Upper lobe of right lung (tissue), 1 donor: ENCODE measurements at regions of chr4 and their contacts with region 1.

Region 1: GRCh38 chr4:7034262-7035091 is 8.7 kb upstream of the TADA2B start:
- DNase-seq: peak; percentile 80
- ATAC-seq: peak; percentile 89
- H3K4me3 ChIP-seq: no peak overlapping the region
- H3K27ac ChIP-seq: peak overlapping the region; percentile 33
- H3K4me1 ChIP-seq: no peaks in the 10 kb centered on the region
- H3K27me3 ChIP-seq: no peaks in the 10 kb centered on the region
- CTCF ChIP-seq: no peak

Region 2: DNA sequence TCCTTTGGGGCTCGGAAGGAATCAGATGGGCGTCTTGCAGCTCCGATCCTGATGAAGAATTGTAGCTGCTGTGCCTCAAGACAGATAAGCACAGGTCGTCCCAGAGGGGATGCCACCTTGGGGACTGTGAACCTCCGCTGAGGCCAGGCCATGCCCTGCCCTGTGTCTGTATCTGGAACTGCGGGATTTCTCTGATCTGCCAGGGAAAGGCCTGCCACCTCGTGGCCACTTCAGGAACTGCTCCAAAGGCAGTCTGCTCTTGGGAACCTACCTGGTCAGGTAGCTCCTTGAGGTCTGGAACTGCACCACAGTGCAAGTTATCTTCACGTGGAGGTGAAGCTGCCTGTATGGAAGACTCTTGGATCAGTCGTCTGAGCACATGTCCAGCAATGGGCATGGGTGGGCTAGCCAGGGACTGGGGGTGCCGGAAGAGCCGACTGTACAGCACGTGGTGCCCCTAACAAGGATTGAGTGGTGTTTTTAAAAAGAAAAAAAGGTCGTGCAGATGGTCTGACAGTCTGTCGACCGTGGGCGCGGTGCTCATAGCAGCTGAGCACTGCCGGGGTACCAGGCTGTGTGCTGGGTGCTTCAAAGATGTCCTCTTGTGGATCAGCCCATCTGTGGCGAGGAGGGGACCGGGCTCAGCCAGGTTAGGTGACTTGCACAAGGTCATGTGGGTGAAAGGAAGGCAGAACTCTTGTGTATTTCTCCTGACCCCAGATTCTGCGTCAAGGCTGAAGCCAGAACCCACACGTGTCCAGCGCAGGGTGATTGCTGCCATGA is 36.4 kb after region 1 on chr4:
- intact Hi-C with region 1: loop called (anchors 5 kb)
- DNase-seq: peak; percentile 92
- ATAC-seq: peak; percentile 66
- H3K4me3 ChIP-seq: no peak overlapping the region
- H3K27ac ChIP-seq: no peak overlapping the region
- H3K4me1 ChIP-seq: peaks cover 22% of the 10 kb centered on the region
- H3K27me3 ChIP-seq: no peaks in the 10 kb centered on the region
- CTCF ChIP-seq: peak; percentile 99